Cardiac septum (tissue), 1 donor: ENCODE measurements at regions of chr11 and their contacts with region 1.

Region 1: GRCh38 chr11:131910523-131911387 is 540.3 kb downstream of the NTM start:
- DNase-seq: no peak

Region 2: GRCh38 chr11:131827430-131827829 is 83.3 kb before region 1 on chr11:
- intact Hi-C with region 1: no loop called
- DNase-seq: no peak

Region 3: DNA sequence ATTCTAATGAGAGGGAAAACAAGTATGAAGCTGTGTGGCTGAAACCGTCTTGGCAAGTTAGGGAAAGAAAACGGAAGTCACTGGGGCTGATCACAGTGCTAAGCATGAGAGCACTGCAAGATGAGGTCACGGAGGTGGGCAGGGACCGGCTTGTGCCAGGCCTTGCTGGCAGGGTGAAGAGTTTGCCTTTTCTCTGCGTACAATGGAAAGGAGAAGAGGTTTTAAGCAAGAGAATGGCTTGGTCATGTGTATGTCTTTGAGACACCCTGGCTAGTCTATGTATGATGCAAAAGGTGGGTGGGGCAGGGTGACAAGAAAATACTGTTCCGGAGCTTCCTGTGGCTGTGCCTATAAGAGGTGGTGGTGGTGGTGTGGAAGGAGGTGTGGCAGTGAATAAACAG is 27.6 kb after region 1 on chr11:
- intact Hi-C with region 1: no loop called
- DNase-seq: no peak

Region 4: GRCh38 chr11:132126973-132127899 is 216.5 kb after region 1 on chr11:
- intact Hi-C with region 1: loop called (anchors 5 kb)
- DNase-seq: no peak